ENCODE measurements at regions of chr7 and their contacts with region 1.

Region 1: DNA sequence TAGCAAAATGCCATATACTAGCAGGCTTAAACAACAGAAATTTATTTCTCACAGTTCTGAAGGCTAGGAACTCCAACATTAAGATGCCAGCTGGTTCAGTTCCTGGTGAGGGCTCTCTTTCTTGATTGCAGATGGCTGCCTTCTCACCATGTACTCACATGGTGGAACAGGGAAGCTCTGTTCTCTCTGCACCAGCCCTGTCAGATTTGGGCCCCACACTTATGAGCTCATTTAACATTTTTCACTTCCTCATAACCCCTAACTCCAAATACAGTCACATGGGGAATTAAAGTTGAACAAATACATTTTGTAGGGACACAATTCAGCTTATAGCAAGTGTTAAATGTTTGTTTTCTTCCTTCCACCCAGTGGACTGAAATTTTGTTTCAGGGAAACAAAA is 218.6 kb upstream of the TAC1 start:
- DNase-seq: no peak
- H3K4me3 ChIP-seq: no peak overlapping the region
- H3K27ac ChIP-seq: no peak overlapping the region
- H3K4me1 ChIP-seq: no peaks in the 10 kb centered on the region
- H3K27me3 ChIP-seq: peaks cover 0 to 3% of the 10 kb centered on the region in 2 donors
- CTCF ChIP-seq: no peak
- POLR2A ChIP-seq: no peak

Region 2: DNA sequence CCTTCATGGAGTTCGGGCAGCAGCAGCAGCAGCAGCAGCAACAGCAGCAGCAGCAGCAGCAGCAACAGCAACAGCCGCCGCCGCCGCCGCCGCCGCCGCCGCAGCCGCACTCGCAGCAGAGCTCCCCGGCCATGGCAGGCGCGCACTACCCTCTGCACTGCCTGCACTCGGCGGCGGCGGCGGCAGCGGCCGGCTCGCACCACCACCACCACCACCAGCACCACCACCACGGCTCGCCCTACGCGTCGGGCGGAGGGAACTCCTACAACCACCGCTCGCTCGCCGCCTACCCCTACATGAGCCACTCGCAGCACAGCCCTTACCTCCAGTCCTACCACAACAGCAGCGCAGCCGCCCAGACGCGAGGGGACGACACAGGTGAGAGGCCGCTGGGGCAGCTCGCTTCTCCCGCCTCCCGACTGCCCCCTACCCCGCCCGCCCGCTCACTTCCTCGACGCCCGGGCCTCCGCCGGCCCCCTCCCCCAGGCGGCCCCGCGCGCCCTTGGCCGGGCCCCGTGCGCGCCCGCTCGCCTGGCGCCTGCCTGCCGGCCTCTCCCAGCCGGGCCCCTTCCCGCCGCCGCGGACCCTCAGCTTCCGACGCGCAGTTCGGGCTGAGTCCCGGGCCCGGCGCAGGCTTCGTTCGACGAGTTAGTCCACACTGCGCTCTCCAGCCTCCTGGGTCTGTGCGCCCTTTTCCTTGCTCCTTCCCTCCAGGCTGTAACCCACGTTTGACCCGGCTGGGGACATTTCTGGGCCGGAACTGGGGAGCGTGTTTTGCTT is 507.1 kb before region 1 on chr7:
- intact Hi-C with region 1: loop called (anchors 5 kb)
- DNase-seq: no peak
- H3K4me3 ChIP-seq: peak overlapping the region; percentile 24 to 68 (median 43)
- H3K27ac ChIP-seq: no peak overlapping the region
- H3K4me1 ChIP-seq: no peaks in the 10 kb centered on the region
- H3K27me3 ChIP-seq: peaks cover 8 to 98% of the 10 kb centered on the region in 2 donors
- CTCF ChIP-seq: no peak
- POLR2A ChIP-seq: no peak

Region 3: GRCh38 chr7:97246317-97246716 is 267.0 kb before region 1 on chr7:
- intact Hi-C with region 1: no loop called
- DNase-seq: no peak
- H3K4me3 ChIP-seq: no peak overlapping the region
- H3K27ac ChIP-seq: no peak overlapping the region
- H3K4me1 ChIP-seq: no peaks in the 10 kb centered on the region
- H3K27me3 ChIP-seq: no peaks in the 10 kb centered on the region
- CTCF ChIP-seq: no peak
- POLR2A ChIP-seq: no peak

Region 4: GRCh38 chr7:97460433-97460832 is 52.9 kb before region 1 on chr7:
- intact Hi-C with region 1: no loop called
- DNase-seq: no peak
- H3K4me3 ChIP-seq: no peak overlapping the region
- H3K27ac ChIP-seq: no peak overlapping the region
- H3K4me1 ChIP-seq: no peaks in the 10 kb centered on the region
- H3K27me3 ChIP-seq: no peaks in the 10 kb centered on the region
- CTCF ChIP-seq: no peak
- POLR2A ChIP-seq: no peak

Measured in breast epithelium (tissue), 4 donors.